ENCODE measurements at regions of chrX and their contacts with region 1.

Region 1: GRCh38 chrX:11180571-11180970 is 69.4 kb downstream of the HCCS start:
- DNase-seq: no peak
- H3K4me3 ChIP-seq: no peak overlapping the region
- H3K27ac ChIP-seq: no peak overlapping the region
- H3K4me1 ChIP-seq: no peaks in the 10 kb centered on the region
- H3K27me3 ChIP-seq: no peaks in the 10 kb centered on the region
- CTCF ChIP-seq: no peak
- POLR2A ChIP-seq: no peak

Region 2: GRCh38 chrX:12469296-12469695 is 1288.7 kb after region 1 on chrX:
- intact Hi-C with region 1: loop called (anchors 5 kb)
- DNase-seq: no peak
- H3K4me3 ChIP-seq: no peak overlapping the region
- H3K27ac ChIP-seq: no peak overlapping the region
- H3K4me1 ChIP-seq: no peaks in the 10 kb centered on the region
- H3K27me3 ChIP-seq: no peaks in the 10 kb centered on the region
- CTCF ChIP-seq: no peak
- POLR2A ChIP-seq: no peak

Measured in vagina (tissue), 2 donors.